Activated B cell treated with CpG ODN at 0.5 μM for 24 hours (primary cell): ENCODE measurements at regions of chr18 and their contacts with region 1.

Region 1: GRCh38 chr18:57621246-57621604 is 411 bp downstream of the NARS1 start:
- DNase-seq: no peak
- ATAC-seq: peak; percentile 9
- H3K4me3 Mint-ChIP-seq: peak overlapping the region; percentile 96
- H3K27ac Mint-ChIP-seq: peak overlapping the region; percentile 98
- H3K4me1 Mint-ChIP-seq: peaks cover 29% of the 10 kb centered on the region
- H3K27me3 Mint-ChIP-seq: no peaks in the 10 kb centered on the region
- CTCF ChIP-seq: no peak

Region 2: DNA sequence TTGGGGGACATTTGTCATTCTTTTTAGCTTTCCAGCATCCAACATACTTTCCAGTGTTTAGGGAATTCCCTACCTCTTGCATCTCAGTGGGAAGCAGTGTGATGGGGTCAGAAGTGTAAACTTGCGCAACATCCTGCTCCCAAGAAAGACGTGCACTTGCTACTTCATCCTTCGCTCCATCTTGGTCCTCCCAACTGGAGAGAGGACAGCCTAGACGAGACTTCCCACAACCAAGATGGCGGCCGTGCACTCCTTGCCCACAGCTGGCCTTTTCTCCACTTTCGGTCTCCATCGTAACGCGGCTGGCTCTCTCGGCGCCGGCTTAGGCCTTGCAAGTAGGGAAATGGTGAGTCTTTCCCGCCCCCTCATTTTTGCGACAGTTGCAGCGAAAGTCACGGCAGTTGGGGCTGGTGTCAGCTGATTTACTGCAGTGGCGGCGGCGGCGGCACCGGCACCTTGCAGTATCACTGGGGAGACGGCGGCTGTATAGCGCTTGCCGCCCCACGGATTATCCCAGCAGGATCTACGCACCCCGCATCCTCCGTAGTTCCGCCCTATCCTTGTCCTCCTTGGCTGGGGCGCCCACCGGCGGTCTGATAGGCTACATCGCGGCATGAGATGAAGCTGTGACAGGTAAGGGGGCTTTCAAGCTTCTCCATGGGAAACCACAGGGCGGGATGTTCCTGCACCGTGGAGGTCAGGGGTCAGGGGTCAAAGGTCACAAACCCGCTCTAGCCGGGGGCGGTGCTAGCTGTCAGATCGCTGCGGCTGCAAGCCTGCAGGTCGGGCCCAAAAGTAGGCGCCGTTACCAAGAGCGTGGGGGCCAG is 970.1 kb before region 1 on chr18 and contains the start of gene WDR7:
- CTCF ChIA-PET with region 1: no interaction called
- POLR2A ChIA-PET with region 1: interaction called, 7 read pairs
- intact Hi-C with region 1: loop called (anchors 1 kb)
- DNase-seq: peak; percentile 81
- ATAC-seq: peak; percentile 93
- H3K4me3 Mint-ChIP-seq: peak within 1 kb of the TSS; percentile 92
- H3K27ac Mint-ChIP-seq: peak within 1 kb of the TSS; percentile 92
- H3K4me1 Mint-ChIP-seq: peaks cover 36% of the 10 kb centered on the region
- H3K27me3 Mint-ChIP-seq: no peaks in the 10 kb centered on the region
- CTCF ChIP-seq: no peak
- total RNA-seq, gene WDR7: 26.0 and 33.4 TPM in 2 replicates

Region 3: GRCh38 chr18:57640236-57640635 is 19.0 kb after region 1 on chr18:
- CTCF ChIA-PET with region 1: no interaction called
- POLR2A ChIA-PET with region 1: interaction called, 11 read pairs
- intact Hi-C with region 1: no loop called
- DNase-seq: no peak
- ATAC-seq: no peak
- H3K4me3 Mint-ChIP-seq: no peak overlapping the region
- H3K27ac Mint-ChIP-seq: peak overlapping the region; percentile 12
- H3K4me1 Mint-ChIP-seq: peaks cover 30% of the 10 kb centered on the region
- H3K27me3 Mint-ChIP-seq: no peaks in the 10 kb centered on the region
- CTCF ChIP-seq: no peak

Region 4: DNA sequence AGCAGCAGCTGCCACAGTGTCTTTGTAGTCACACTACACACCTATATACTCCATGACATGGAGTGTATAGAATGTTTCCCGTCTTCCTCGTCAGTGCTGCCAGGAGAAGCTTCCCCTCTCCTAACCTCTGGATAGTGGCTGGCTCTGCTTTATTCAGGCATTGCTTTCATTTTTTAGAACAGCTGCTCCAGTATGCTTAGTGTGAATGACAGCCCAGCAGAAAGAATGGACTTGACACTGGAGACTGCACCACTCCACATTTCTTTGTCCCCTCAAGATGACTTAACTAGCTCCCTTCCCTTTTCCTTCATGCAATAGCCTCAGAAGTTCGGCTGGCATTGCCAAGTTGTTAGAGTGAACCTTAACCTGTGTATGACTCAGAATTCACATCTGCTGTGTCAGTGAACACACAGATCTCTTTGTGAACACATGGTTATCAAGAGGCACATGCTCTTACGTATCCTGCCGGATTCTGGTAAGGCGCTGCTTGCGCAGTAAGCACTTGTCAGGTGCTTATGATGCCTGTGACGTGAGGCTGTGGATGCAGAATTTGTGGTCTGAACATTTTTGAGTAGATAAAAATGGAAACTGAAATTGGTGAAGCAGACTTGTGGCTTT is 496.7 kb after region 1 on chr18:
- CTCF ChIA-PET with region 1: interaction called, 4 read pairs
- POLR2A ChIA-PET with region 1: interaction called, 14 read pairs
- intact Hi-C with region 1: no loop called
- DNase-seq: no peak
- ATAC-seq: no peak
- H3K4me3 Mint-ChIP-seq: no peak overlapping the region
- H3K27ac Mint-ChIP-seq: no peak overlapping the region
- H3K4me1 Mint-ChIP-seq: peaks cover 10% of the 10 kb centered on the region
- H3K27me3 Mint-ChIP-seq: no peaks in the 10 kb centered on the region
- CTCF ChIP-seq: no peak

Region 5: GRCh38 chr18:59139371-59140298 is 1518.4 kb after region 1 on chr18 and contains the start of gene SEC11C:
- CTCF ChIA-PET with region 1: no interaction called
- POLR2A ChIA-PET with region 1: no interaction called
- intact Hi-C with region 1: loop called (anchors 1 kb)
- DNase-seq: peak; percentile 93
- ATAC-seq: peak; percentile 84
- H3K4me3 Mint-ChIP-seq: peak within 1 kb of the TSS; percentile 95
- H3K27ac Mint-ChIP-seq: peak within 1 kb of the TSS; percentile 100
- H3K4me1 Mint-ChIP-seq: peaks cover 44% of the 10 kb centered on the region
- H3K27me3 Mint-ChIP-seq: peaks cover 8% of the 10 kb centered on the region
- CTCF ChIP-seq: no peak
- total RNA-seq, gene SEC11C: 112 and 126 TPM in 2 replicates

Region 6: DNA sequence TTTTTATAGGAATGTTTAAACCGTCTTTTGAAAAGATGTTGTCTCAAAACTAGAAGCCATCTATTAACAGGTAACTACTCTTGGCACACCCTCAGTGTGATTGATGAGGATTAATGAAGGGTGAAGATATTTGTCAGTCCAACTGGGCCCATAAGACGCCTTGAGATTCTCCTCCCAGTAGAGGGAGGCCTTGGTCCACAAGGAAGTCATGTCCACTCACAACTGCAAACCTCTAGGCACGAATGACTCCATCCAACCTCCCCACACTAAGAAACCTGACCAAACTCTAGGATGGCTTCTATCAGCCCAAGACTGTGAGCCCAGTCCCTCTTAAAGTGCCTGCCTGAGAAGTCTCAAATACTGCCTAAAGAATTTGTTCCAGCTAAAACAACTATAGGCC is 1579.6 kb after region 1 on chr18:
- CTCF ChIA-PET with region 1: no interaction called
- POLR2A ChIA-PET with region 1: no interaction called
- intact Hi-C with region 1: no loop called
- DNase-seq: no peak
- ATAC-seq: no peak
- H3K4me3 Mint-ChIP-seq: no peak overlapping the region
- H3K27ac Mint-ChIP-seq: no peak overlapping the region
- H3K4me1 Mint-ChIP-seq: no peaks in the 10 kb centered on the region
- H3K27me3 Mint-ChIP-seq: peaks cover 24% of the 10 kb centered on the region
- CTCF ChIP-seq: no peak